Vagina (tissue), 2 donors: ENCODE measurements at regions of chr12 and their contacts with region 1.

Region 1: GRCh38 chr12:27434673-27435565 is 11.6 kb upstream of the SMCO2 start:
- DNase-seq: no peak
- H3K4me3 ChIP-seq: no peak overlapping the region
- H3K27ac ChIP-seq: no peak overlapping the region
- H3K4me1 ChIP-seq: no peaks in the 10 kb centered on the region
- H3K27me3 ChIP-seq: no peaks in the 10 kb centered on the region
- CTCF ChIP-seq: peak; percentile 18 to 77 (median 32)
- POLR2A ChIP-seq: no peak

Region 2: GRCh38 chr12:27635349-27635972 is 200.5 kb after region 1 on chr12:
- intact Hi-C with region 1: loop called (anchors 5 kb)
- DNase-seq: no peak
- H3K4me3 ChIP-seq: no peak overlapping the region
- H3K27ac ChIP-seq: no peak overlapping the region
- H3K4me1 ChIP-seq: no peaks in the 10 kb centered on the region
- H3K27me3 ChIP-seq: no peaks in the 10 kb centered on the region
- CTCF ChIP-seq: peak; percentile 52 to 63 (median 54)
- POLR2A ChIP-seq: no peak